Heart right ventricle (tissue), 16 donors: ENCODE measurements at regions of chr17 and their contacts with region 1.

Region 1: GRCh38 chr17:11925262-11926021 is 71.8 kb downstream of the ZNF18 start:
- DNase-seq: peak; percentile 18 to 53
- ATAC-seq: peak; percentile 61 to 95 (median 82)
- H3K4me3 ChIP-seq: no peak overlapping the region
- H3K27ac ChIP-seq: peak overlapping the region in 8 of 10 donors; percentile 12 to 74 (median 55)
- H3K4me1 ChIP-seq: peaks cover 0 to 13% (median 0%) of the 10 kb centered on the region in 9 donors
- H3K27me3 ChIP-seq: no peaks in the 10 kb centered on the region
- CTCF ChIP-seq: no peak

Region 2: DNA sequence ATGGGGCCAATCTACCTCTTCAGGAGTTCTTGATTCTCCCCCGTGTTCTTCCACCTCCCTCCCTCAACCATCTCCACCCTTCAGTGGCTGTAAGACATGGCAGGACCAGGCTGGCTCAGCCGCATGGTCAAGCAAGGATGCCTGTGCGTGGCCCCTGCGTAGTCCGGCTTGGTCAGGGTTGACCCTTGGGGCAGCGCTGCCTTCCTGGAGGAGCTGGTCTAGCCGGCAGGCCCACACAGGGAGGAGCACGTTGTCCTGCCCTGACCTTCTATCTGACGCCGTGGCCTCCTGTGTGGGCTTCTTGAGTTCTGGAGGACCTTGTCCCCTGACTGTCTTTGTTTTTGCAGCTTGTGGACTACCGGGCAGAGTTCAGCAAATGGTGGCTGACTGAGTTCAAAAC is 157.3 kb before region 1 on chr17:
- intact Hi-C with region 1: loop called in 2 of 10 experiments (anchors 5 to 10 kb)
- DNase-seq: no peak
- ATAC-seq: no peak
- H3K4me3 ChIP-seq: no peak overlapping the region
- H3K27ac ChIP-seq: no peak overlapping the region
- H3K4me1 ChIP-seq: peaks cover 0 to 31% (median 4%) of the 10 kb centered on the region in 9 donors
- H3K27me3 ChIP-seq: peaks cover 0 to 11% (median 0%) of the 10 kb centered on the region in 7 donors
- CTCF ChIP-seq: no peak